Gastrocnemius medialis (tissue), 4 donors: ENCODE measurements at regions of chr14 and their contacts with region 1.

Region 1: DNA sequence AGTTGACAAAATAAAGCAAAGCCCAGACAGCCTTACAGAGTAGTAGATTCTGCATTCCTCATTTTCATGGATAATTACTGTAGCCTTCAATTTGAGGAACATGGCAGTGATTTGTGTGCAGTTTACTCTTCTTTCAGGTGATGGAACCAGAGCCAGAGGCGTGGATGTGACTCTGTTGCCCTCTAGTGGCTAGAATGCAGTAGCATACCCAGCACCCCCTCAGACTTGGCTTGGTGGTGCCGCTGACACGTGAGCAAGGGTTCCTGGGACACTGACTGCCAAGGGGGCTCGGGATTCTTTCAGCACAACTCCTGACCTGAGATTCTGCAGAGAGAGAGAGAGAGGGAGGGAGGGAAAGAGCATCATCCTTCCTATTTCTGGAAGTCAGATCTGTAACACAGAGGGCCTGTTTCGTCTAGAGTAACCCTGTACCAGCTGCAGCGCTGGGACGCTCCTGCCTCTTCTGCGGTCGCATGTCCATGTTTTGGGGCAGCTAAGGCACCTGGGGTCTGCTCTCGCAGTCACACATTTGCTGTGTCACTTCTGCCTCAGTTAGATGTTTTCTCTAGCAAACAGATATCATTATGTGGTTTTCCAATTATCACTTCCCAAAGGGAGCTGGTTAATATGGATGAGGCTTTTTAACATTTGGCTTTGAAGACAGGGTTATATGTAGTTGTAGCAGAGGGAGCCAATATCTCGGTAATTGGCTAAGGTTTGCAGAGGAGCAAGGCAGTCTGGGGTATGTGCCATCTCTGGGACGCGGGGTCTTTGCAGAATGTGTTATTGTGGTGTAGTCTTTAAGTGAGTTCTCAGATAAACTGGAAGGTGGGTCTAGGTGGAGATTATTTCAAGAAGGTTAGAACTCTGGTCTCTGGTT is 428.1 kb downstream of the NRXN3 start:
- DNase-seq: peak; percentile 7 to 28
- ATAC-seq: peak; percentile 73 to 79
- H3K4me3 ChIP-seq: no peak overlapping the region
- H3K27ac ChIP-seq: no peak overlapping the region
- H3K4me1 ChIP-seq: no peaks in the 10 kb centered on the region
- H3K27me3 ChIP-seq: no peaks in the 10 kb centered on the region
- CTCF ChIP-seq: peak; percentile 72 to 88 (median 79)
- POLR2A ChIP-seq: no peak

Region 2: GRCh38 chr14:78448164-78449094 is 149.9 kb before region 1 on chr14:
- in situ Hi-C with region 1: no loop called
- intact Hi-C with region 1: loop called (anchors 1 kb)
- DNase-seq: peak in 1 of 2 donors; percentile 25
- ATAC-seq: peak in 1 of 2 donors; percentile 64
- H3K4me3 ChIP-seq: no peak overlapping the region
- H3K27ac ChIP-seq: no peak overlapping the region
- H3K4me1 ChIP-seq: no peaks in the 10 kb centered on the region
- H3K27me3 ChIP-seq: no peaks in the 10 kb centered on the region
- CTCF ChIP-seq: peak; percentile 55 to 78 (median 71)
- POLR2A ChIP-seq: no peak